Head of caudate nucleus (tissue), 42 donors: ENCODE measurements at regions of chr20 and their contacts with region 1.

Region 1: DNA sequence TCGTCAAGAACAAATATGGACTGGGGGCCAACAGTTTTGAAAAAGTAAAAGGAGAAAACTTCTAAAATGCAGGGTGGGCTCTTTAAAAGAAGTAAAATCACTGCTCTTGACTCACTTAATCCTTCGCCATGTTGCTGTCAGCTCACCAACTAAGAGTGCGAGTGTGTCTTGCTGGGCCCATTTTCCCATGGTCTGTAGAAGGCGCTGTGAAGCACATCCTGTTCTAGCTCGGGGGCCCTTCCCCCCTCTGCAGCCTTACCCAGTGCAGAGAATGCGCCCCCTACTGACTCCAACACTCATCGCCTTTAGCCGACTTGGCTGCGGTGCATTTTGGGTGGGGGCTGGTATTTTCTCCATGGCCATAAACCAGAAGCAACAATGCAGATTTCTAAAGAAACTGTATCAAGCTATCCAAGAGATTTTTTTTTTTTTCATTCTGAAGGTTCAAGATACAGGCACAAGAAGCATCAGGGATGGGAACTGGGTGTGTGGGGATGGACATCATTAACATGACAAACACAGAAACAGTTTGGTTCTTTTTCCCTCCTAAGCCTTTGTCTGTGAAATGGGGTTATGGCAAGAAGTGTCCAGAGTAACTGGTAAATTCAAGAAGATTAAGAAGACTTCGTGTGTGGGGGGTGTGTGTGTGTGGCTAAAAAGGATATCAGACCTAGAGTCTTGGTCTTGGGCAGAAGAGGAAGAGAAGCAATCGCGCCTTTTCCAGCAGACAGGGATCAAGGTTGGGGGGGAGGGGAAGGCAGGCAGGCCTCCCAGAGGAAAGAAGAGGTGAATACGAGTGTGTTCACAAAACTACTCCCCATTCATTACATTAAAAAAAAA is 1.7 kb downstream of the ADNP start:
- DNase-seq: peak; percentile 81 to 97 (median 92)

Region 2: DNA sequence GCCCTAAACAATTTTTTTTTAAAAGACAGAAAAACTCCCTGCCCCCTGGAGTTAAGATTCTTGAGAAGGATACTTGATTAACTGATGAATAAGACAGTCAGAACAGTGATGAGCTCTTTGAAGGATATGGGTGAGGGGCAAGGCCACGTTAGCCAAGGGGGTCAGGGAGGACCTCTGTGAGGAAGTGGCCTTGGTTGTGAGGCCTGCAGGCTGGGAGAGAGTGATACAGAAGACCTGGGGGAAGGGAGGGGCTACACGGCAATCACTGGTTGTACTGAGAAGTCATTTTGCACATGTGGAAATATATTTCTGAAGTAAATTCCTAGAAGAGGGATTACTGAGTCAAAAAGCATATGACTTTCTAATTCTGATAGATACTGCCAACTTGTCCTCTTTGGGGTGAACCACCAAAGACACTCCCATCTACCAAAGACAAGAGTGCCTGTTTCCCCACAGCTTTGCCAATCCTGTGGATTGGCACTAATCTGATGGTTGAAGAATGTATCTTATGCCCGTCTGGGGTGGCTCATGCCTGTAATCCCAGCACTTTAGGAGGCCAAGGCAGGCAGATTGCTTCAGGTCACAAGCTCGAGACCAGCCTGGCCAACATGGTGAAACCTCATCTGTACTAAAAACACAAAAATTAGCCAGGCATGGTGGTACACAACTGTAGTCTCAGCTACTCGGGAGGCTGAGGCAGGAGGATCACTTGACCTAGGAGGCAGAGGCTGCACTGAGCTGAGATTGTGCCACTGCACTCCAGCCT is 156.9 kb before region 1 on chr20:
- intact Hi-C with region 1: no loop called
- DNase-seq: peak in 2 of 42 donors; percentile 7 to 14

Region 3: DNA sequence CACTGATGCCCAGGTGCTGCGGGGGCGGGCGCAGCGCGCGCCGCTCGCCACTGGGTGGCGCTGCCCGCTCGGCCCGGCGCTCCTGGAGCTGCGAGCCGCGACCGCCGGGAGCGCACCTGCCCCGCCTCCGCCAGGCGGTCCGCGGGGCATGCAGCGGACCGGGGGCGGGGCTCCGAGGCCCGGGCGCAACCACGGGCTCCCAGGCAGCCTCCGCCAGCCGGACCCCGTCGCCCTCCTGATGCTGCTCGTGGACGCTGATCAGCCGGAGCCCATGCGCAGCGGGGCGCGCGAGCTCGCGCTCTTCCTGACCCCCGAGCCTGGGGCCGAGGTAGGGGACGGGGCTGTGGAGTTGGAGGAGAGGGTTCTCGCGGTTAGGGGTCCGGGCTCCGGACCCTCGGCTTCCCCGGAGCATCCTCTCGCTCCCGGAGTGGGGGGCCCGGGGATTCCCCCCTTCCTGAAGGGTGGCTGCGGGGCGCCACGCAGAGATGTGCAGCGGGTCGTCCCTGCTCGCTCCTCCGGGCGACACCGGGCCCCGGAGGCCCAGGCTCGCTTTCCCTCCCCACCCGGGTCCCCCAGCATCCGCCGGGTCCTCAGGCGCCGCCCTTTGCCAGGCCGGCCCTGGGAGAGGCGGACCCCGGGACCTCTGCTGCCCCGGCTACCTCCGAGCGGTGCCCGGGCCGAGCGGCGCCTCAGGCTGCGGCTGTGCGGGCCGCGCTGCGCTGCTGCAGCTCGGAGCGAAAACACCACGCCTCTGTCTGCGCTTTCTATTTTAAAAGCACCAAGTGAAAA is 134.5 kb before region 1 on chr20 and contains the start of gene BCAS4:
- intact Hi-C with region 1: loop called (anchors 2 kb)
- DNase-seq: peak; percentile 32 to 88 (median 74)

Region 4: GRCh38 chr20:50958615-50959542 is 29.4 kb after region 1 on chr20 and contains the start of gene MOCS3:
- intact Hi-C with region 1: loop called (anchors 1 kb)
- DNase-seq: peak; percentile 61 to 96 (median 91)

Region 5: DNA sequence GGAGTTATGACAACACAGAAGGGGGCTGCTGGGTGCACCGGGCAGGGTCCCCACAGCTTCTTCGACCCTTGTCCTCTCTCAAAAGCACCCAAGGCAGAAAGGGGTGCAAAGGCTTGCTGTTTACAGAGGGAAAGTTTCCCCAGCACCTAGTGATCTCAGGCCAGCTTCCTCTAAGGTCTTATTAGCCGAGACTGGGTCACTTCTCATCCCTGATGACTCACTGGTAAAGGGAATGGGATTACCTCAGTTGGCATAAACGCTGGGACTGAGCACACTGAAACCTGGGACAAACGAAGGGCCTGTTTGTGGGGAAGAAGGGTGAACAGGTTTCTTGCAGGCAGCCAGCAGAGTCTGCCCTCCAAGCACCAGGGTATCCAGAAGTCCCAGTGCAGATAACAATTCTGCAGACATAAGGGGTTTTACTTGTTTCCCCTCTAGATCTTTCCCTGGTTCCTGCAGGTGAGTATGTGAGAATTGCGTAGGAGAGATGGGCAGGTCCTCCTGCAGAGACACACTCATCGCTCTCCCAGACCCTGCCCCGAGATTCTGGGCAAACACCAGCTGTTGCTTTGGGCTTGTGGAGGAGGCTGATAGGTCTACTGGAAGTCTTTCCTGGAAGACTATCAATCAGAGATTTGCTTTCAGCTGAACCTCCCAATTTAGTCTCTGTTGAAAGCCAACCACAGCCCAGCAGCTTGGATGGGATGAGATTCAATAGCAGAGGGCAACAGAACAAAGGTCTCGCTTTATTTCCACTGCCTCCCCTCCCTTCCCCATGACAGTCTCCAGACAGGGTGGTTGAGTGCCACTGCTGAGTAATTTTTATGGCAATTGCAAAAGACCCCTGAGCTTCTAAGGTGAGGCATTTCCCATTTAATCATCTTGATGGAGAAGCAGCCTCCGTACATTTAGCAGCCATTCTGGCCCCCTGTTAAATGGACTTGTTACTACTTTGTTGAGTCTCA is 67.7 kb after region 1 on chr20:
- intact Hi-C with region 1: no loop called
- DNase-seq: peak in 3 of 42 donors; percentile 5 to 47 (median 16)